BJ (cell line): ENCODE measurements at regions of chr4 and their contacts with region 1.

Region 1: DNA sequence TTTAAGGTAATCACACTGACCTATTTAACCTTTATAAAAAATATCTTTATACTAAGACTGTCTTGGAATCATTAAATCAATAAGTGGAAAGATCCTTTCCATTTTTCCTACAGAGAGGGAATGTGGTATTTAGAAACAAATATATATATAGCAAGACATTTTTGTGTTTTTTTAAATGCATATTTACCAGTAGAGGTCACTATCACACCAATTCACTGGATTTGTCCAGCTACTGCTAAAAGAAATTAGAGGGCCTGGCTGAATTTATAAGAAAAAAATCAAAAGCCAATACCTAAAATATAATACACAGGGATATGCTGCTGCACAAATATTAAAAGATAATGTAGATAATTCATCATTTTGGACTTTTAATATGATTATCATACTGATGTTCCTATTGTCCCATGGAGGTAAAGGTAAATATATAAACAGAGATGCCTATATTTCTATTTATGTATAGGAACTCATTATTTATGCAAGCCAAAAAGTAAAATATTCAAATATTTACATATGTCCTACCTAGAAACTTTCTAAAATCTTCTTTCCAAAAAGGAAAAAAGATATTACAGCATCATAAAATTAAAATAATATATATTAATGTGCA is 69.5 kb downstream of the PDE5A start:
- DNase-seq: peak; percentile 22
- H3K4me3 ChIP-seq: no peak overlapping the region
- H3K27me3 ChIP-seq: no peaks in the 10 kb centered on the region
- CTCF ChIP-seq: peak; percentile 29; the same call in 1 of the 2 replicates

Region 2: GRCh38 chr4:120056246-120056645 is 497.1 kb after region 1 on chr4:
- CTCF ChIA-PET with region 1: interaction called, 20 read pairs
- POLR2A ChIA-PET with region 1: no interaction called
- DNase-seq: peak; percentile 9
- H3K4me3 ChIP-seq: no peak overlapping the region
- H3K27me3 ChIP-seq: no peaks in the 10 kb centered on the region
- CTCF ChIP-seq: peak; percentile 40